A549 (cell line): ENCODE measurements at regions of chr10 and their contacts with region 1.

Region 1: DNA sequence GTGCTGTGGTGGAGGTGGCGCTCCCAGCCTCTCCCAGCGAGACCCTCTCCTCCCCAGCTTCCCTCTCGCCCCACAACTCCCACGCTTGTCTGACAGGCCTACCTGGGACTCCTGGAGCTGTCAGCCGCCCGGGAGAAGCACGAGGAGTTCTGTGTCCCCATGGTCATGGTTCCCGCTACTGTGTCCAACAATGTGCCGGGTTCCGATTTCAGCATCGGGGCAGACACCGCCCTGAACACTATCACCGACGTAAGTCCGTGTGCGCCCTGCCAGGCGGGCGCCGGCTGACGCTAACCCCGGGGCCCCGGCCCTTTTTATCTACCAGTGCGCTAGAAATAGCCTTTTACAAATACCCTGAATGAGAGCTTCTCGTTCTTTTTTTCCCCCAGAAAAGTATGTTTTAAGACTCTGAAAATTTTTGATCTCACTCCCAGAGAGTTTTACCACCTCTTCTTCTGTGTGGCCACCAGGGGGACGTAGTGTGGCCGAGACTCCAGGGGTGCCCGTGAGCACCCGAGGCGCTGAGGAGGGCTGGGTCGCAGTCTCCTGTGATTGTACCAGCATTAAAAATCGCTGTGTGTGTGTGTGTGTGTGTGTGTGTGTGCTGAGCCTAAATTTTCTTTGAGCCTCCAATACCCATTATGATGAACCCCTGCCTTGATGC is 52.6 kb downstream of the PFKP start:
- DNase-seq: peak; percentile 56 to 65
- ATAC-seq: peak; percentile 54 to 74; a peak in 4 of 6 replicates
- H3K4me3 ChIP-seq: no peak overlapping the region
- H3K27ac ChIP-seq: peak overlapping the region in 1 of 2 experiments; percentile 58; a peak in 3 of 6 replicates
- H3K4me1 ChIP-seq: peaks cover 24% of the 10 kb centered on the region; the same call in 2 of the 3 replicates
- CTCF ChIP-seq: peak; percentile 50
- EP300 ChIP-seq: no peak
- POLR2A ChIP-seq: no peak
- RAD21 ChIP-seq: peak in 1 of 2 experiments; percentile 28; a peak in 2 of 5 replicates

Region 2: GRCh38 chr10:3107426-3107961 is 12.4 kb before region 1 on chr10:
- CTCF ChIA-PET with region 1: interaction called, 20 read pairs
- POLR2A ChIA-PET with region 1: no interaction called
- DNase-seq: peak; percentile 88 to 95
- ATAC-seq: peak; percentile 78 to 80
- H3K4me3 ChIP-seq: peak overlapping the region; percentile 15; the same call in 1 of the 3 replicates
- H3K27ac ChIP-seq: peak overlapping the region; percentile 86 to 92
- H3K4me1 ChIP-seq: peaks cover 94% of the 10 kb centered on the region
- CTCF ChIP-seq: no peak
- EP300 ChIP-seq: peak; percentile 82 to 96; a peak in 3 of 5 replicates
- POLR2A ChIP-seq: no peak
- RAD21 ChIP-seq: peak; percentile 4 to 42; a peak in 2 of 5 replicates